ENCODE measurements at regions of chr4 and their contacts with region 1.

Region 1: DNA sequence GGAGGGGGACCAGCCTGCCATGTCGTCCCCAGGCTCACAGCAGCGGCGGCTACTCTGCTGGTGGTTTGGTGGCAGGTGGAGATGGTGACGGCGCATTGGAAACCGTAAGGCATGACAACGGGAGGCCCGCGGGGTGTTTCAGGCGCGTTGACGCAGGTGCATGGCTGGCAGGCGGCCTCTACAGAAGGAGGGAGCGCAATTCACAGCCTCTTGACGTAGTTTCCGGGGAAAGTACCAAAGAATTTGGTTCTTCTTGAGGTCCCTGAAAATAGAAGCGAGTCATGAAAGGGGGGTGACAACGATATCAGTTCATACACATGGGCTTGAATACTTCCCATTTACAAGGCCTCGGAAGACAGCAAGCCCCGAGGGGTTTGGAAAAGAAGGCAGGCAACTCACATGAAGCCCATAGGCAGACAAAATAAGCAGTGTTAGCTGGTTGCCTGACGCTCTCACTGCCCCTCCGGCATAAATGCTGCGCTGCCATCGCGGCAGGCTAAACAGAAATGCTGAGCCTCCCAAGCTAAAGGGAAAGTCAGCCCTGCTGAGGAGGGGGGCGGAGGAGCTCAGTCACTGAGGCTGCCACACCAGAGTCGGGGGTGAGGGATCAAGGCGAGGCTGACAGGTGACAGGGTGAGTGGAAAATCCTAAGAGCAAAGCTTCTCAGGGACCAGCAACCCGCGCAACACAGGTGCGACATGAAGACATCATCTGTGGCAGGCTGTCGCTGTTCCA is 52.3 kb upstream of the PDLIM3 start:
- DNase-seq: no peak
- H3K4me3 ChIP-seq: no peak overlapping the region
- H3K27ac ChIP-seq: no peak overlapping the region
- H3K4me1 ChIP-seq: peaks cover 10% of the 10 kb centered on the region
- H3K27me3 ChIP-seq: no peaks in the 10 kb centered on the region
- CTCF ChIP-seq: no peak

Region 2: DNA sequence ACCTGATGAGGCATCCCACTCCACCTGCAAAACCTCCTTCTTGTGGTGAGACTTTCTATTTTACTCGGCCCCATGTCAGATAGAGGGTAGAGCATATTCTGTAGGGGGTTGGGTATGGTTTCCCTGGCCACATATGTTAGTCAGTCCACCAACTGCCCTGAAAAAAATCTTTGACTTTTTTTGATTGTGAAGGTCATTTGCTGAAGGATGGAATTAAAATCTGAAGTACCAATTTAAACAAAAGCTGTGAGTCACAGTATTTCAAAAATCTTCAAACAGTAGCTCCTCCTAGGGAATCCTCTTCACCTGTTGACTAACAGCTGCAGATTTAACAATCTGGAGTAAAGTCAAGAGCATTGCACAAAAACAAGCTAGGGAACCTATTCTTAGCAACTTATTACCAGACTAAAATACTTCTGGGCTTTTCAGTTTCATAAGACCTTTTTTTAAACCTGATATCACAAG is 108.1 kb before region 1 on chr4:
- CTCF ChIA-PET with region 1: no interaction called
- dilution Hi-C with region 1: no loop called
- in situ Hi-C with region 1: loop called (anchors 10 to 25 kb)
- intact Hi-C with region 1: no loop called
- DNase-seq: no peak
- H3K4me3 ChIP-seq: no peak overlapping the region
- H3K27ac ChIP-seq: no peak overlapping the region
- H3K4me1 ChIP-seq: no peaks in the 10 kb centered on the region
- H3K27me3 ChIP-seq: peaks cover 3% of the 10 kb centered on the region
- CTCF ChIP-seq: no peak

Region 3: GRCh38 chr4:185534866-185535611 is 52.6 kb before region 1 on chr4 and contains the start of gene PDLIM3:
- CTCF ChIA-PET with region 1: no interaction called
- dilution Hi-C with region 1: no loop called
- in situ Hi-C with region 1: no loop called
- intact Hi-C with region 1: no loop called
- DNase-seq: peak; percentile 15
- H3K4me3 ChIP-seq: peak within 1 kb of the TSS; percentile 46 to 73 (median 55)
- H3K27ac ChIP-seq: no peak within 1 kb of the TSS
- H3K4me1 ChIP-seq: no peaks in the 10 kb centered on the region
- H3K27me3 ChIP-seq: peaks cover 8% of the 10 kb centered on the region
- CTCF ChIP-seq: no peak
- total RNA-seq, gene PDLIM3: 0.24 to 9.0 TPM

Region 4: DNA sequence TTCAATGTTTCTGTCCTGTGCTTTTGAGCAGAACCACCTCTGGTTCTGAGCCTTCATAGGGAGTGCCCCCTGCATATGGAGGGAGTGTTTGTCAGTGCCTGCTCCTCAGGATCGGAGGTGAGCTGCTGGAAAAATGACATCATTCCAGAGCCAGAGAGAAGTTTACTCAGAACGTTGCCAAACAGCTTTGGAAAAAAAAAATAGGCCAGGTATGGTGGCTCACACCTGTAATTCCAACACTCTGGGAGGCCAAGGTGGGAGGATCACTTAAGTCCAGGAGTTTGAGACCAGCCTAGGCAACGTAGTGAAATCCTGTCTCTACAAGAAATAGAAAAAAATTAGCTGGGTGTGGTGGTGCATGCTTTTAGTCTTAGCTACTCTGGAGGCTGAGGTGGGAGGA is 25.1 kb before region 1 on chr4:
- CTCF ChIA-PET with region 1: interaction called, 11 read pairs
- dilution Hi-C with region 1: no loop called
- in situ Hi-C with region 1: no loop called
- intact Hi-C with region 1: no loop called
- DNase-seq: no peak
- H3K4me3 ChIP-seq: no peak overlapping the region
- H3K27ac ChIP-seq: no peak overlapping the region
- H3K4me1 ChIP-seq: peaks cover 9% of the 10 kb centered on the region
- H3K27me3 ChIP-seq: no peaks in the 10 kb centered on the region
- CTCF ChIP-seq: no peak

Measured in mammary epithelial cell (primary cell).